Heart right ventricle (tissue), 16 donors: ENCODE measurements at regions of chr3 and their contacts with region 1.

Region 1: GRCh38 chr3:14261229-14261628 is 82.6 kb downstream of the LSM3 start:
- DNase-seq: peak; percentile 81 to 84
- ATAC-seq: peak; percentile 71 to 94 (median 87)
- H3K4me3 ChIP-seq: no peak overlapping the region
- H3K27ac ChIP-seq: no peak overlapping the region
- H3K4me1 ChIP-seq: peaks cover 0 to 14% (median 4%) of the 10 kb centered on the region in 9 donors
- H3K27me3 ChIP-seq: peaks cover 0 to 50% (median 14%) of the 10 kb centered on the region in 7 donors
- CTCF ChIP-seq: peak; percentile 95 to 99 (median 97)

Region 2: GRCh38 chr3:14057701-14058100 is 203.5 kb before region 1 on chr3:
- intact Hi-C with region 1: no loop called
- DNase-seq: no peak
- ATAC-seq: no peak
- H3K4me3 ChIP-seq: no peak overlapping the region
- H3K27ac ChIP-seq: no peak overlapping the region
- H3K4me1 ChIP-seq: no peaks in the 10 kb centered on the region
- H3K27me3 ChIP-seq: peaks cover 0 to 8% (median 0%) of the 10 kb centered on the region in 7 donors
- CTCF ChIP-seq: no peak

Region 3: GRCh38 chr3:14391033-14391432 is 129.8 kb after region 1 on chr3:
- intact Hi-C with region 1: loop called in 1 of 10 experiments (anchors 5 kb)
- DNase-seq: no peak
- ATAC-seq: peak in 6 of 8 donors; percentile 28 to 83 (median 46)
- H3K4me3 ChIP-seq: no peak overlapping the region
- H3K27ac ChIP-seq: peak overlapping the region in 1 of 10 donors; percentile 56
- H3K4me1 ChIP-seq: peaks cover 0 to 29% (median 3%) of the 10 kb centered on the region in 9 donors
- H3K27me3 ChIP-seq: peaks cover 0 to 43% (median 21%) of the 10 kb centered on the region in 7 donors
- CTCF ChIP-seq: no peak

Region 4: DNA sequence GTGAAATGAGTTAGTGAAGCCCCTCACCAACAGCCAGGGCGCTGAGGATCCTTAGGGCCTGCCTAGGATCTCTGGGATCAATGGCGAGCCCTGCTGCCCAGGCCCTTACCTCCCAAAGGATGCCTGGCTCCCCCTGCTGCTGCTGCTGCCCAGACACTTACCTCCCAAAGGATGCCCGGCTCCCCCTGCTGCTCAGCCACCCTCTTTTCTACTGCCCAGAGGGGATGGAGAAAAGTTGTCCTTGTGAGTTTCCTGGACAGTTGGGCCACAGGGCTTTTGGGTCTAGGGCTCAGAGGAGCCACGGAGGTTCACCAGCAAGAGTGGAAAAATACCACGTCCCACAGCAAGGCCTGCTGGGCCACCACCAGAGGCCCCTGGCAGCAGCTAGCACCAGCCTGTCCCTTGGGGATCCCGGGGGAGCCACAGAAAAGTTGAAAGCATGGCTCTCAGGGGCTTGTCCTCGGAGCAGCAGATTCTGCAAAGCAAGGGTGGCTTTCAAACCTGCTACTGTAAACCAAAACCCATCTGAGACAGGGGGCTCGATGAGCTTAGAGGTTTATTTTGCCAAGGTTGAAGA is 200.6 kb after region 1 on chr3:
- intact Hi-C with region 1: loop called in 5 of 10 experiments (anchors 2 to 5 kb)
- DNase-seq: peak; percentile 51 to 59
- ATAC-seq: peak in 6 of 8 donors; percentile 35 to 74 (median 60)
- H3K4me3 ChIP-seq: no peak overlapping the region
- H3K27ac ChIP-seq: no peak overlapping the region
- H3K4me1 ChIP-seq: peaks cover 2 to 42% (median 25%) of the 10 kb centered on the region in 9 donors
- H3K27me3 ChIP-seq: peaks cover 0 to 37% (median 4%) of the 10 kb centered on the region in 7 donors
- CTCF ChIP-seq: peak in 8 of 9 donors; percentile 22 to 72 (median 55)

Region 5: DNA sequence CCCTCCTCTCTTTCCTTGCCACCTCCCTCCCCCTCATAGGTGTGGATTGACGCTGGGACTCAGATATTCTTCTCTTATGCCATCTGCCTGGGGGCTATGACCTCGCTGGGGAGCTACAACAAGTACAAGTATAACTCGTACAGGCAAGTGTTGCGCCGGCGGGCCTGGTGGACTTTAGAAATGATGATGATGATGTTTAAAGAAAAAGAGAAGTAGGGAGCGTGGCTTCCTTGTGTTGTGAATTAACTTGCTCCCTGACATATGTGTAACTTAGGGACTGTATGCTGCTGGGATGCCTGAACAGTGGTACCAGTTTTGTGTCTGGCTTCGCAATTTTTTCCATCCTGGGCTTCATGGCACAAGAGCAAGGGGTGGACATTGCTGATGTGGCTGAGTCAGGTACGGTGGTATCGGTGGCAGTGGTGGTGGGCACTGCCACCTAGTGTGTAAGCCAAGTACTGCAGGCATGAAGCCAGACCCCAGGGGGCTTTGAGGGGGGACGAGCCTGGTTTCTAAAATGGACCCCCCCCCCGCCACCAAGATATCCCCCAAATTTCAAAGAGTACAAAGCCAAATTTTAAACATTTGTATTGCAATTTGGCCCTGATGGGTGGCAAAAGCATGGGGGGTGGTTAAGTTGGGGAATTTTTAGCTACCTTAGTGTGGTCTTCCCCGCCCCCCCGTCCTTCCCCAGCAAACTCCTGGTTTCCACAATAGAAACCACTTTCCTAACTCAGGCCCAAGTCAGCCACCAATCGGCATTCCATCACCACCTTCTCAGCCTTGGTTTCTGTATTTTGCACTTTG is 206.8 kb after region 1 on chr3:
- intact Hi-C with region 1: loop called in 9 of 10 experiments (anchors 1 to 5 kb)
- DNase-seq: peak in 1 of 2 donors; percentile 40
- ATAC-seq: peak in 7 of 8 donors; percentile 44 to 78 (median 57)
- H3K4me3 ChIP-seq: no peak overlapping the region
- H3K27ac ChIP-seq: no peak overlapping the region
- H3K4me1 ChIP-seq: peaks cover 0 to 26% (median 2%) of the 10 kb centered on the region in 9 donors
- H3K27me3 ChIP-seq: peaks cover 0 to 28% (median 0%) of the 10 kb centered on the region in 7 donors
- CTCF ChIP-seq: peak; percentile 84 to 93 (median 88)

Region 6: GRCh38 chr3:14548321-14548729 is 287.1 kb after region 1 on chr3:
- intact Hi-C with region 1: loop called in 5 of 10 experiments (anchors 1 to 10 kb)
- DNase-seq: peak; percentile 64 to 82
- ATAC-seq: peak; percentile 79 to 93 (median 86)
- H3K4me3 ChIP-seq: no peak overlapping the region
- H3K27ac ChIP-seq: peak overlapping the region in 2 of 10 donors; percentile 12 to 44
- H3K4me1 ChIP-seq: peaks cover 0 to 35% (median 11%) of the 10 kb centered on the region in 9 donors
- H3K27me3 ChIP-seq: peaks cover 0 to 7% (median 0%) of the 10 kb centered on the region in 7 donors
- CTCF ChIP-seq: peak; percentile 45 to 84 (median 78)